Head of caudate nucleus (tissue), 42 donors: ENCODE measurements at regions of chr16 and their contacts with region 1.

Region 1: DNA sequence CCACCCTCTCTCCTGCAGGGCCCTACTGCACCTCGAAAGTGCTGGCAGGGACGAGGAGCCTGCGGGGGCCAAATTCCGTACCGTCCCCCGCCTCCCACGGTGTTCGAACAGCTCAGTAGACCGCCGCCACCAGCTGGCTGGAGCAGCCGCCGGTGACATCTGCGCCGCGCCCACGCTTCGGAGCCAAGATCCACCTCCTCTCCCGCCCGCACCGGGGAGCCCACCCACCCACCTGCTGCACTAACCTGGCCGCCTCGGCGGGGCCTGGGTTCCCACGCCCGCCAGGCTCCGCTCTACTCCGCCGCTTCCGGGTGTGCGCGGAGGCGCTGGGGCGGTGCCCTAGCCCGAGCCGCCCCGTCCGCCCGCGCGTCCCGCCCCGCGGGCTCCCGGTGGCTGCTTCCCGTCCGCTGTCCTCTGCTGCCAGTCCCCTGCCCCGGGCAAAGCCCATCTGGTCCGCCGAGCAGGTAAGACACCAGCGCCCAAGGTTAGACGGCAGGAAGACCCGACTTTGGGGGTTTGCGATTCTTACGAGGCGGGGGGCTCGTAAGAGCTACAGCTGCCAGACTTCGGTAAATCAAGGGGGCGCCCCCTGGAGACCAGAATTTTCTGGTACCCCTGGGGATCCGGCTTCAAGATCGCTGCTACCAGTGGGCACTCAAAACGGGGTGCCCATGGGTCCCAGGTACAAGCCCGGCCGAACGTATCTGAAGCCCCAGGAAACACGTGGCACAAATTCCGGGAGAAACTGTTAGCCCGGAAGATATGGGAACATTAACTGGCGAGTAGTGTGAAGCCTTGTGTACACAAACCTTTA is at the starts of genes FBXL8 and TRADD:
- DNase-seq: peak in 38 of 42 donors; percentile 48 to 86 (median 72)

Region 2: GRCh38 chr16:66947302-66948065 is 212.3 kb before region 1 on chr16:
- intact Hi-C with region 1: loop called (anchors 10 kb)
- DNase-seq: peak; percentile 37 to 94 (median 86)

Region 3: GRCh38 chr16:66977341-66978113 is 182.3 kb before region 1 on chr16:
- intact Hi-C with region 1: loop called (anchors 2 kb)
- DNase-seq: peak; percentile 77 to 98 (median 93)

Region 4: DNA sequence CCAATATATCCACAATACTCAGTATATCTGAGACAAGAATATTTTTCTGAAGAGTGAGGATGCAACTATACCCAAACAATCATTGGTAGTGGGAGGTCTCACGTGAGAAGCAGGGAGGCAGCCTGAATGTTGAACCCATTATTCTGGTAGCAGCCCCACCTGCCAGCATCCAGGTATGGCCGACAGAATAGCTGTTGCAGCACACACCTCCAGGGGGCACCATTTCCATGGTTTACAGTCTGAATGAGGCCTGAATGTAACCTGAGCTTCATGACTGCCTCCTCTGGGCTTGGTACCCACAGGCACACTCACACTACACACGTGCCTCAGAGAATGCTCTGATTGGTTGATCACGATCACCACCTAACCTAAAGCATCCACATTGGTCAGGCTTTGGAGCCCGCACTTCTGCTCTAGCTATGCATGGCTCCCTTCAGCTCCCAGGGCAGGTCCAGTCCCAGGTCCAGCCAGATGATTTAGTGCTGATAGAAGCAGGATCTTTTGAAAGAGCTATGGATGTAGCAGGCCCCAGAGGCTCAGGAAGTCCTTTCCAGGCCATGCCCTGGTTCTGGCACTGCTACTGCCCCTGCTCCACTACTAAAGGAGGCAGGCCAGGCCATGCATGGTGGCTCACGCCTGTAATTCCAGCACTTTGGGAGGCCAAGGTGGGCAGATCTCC is 141.9 kb before region 1 on chr16:
- intact Hi-C with region 1: loop called (anchors 10 kb)
- DNase-seq: peak in 41 of 42 donors; percentile 48 to 91 (median 76)

Region 5: DNA sequence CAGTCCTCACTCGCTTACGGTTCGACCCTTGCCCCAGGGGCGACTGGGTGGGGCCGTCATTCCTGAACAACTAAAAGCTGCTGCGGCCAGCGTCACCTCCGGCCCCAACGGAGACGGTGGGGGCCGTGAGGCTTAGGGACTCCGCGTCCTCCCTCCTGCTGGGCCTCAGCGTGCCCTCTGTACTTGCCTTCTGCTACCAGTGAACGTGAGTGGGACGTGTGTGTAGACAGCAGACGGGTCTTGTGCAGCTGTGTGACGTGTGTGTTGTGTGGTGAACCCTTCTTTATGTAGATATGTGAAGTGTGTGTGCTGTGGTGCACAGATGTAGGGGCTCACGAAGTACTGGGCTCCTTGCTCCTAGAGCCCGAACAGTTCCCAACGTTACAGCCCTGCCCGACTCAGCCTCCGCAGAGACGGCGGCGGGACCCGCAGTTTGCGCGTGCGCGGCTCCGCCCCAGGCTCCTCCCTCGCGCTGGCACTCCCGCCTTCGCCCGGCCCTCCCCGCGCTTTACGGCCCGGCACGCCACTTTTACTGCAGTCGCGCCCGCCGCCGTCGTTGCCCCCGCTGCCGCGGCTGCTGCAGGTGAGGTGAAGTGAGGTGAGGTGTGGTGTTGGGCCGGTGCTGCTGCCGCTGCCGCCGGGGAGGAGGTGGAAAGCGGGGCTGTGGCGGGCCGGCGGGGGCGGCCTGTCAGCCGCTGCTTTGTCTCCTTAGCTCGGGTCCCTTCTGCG is 50.2 kb before region 1 on chr16 and contains the start of gene PHAF1:
- intact Hi-C with region 1: loop called (anchors 10 kb)
- DNase-seq: peak; percentile 88 to 99 (median 97)

Region 6: GRCh38 chr16:67137605-67138004 is 22.2 kb before region 1 on chr16:
- intact Hi-C with region 1: no loop called
- DNase-seq: no peak